GM12878 (cell line): ENCODE measurements at regions of chr4 and their contacts with region 1.

Region 1: DNA sequence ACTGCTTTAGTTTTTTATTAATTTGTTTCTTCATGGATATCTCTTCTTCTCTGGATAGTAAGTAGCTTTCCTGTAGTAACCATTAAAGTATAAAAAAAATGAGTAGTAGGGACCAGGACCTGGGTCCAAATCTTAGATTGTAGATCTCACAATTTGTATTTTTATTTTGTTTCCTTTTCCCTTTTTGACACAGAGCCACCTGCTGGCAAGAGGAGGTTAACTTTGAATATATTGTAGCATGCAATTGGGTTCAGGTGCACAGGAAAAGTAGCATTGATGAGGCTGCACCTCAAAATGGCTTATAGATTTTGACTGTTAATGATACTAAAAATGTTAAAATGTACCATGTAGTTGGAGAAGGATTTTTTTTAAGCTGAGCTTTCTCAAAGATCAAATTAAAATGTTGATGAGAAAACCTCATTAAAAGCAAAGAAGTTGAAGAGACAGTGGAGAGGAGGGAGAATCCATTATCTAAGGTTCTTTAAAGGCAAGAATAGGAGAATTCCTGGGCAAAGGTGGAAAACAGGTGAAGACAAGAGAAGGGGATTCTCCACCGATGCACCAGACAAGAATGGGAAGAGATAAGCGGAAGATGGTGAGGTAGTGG is 48.3 kb upstream of the HPGDS start:
- DNase-seq: no peak
- ATAC-seq: peak; percentile 67
- H3K4me3 ChIP-seq: no peak overlapping the region
- H3K27ac ChIP-seq: no peak overlapping the region
- H3K4me1 ChIP-seq: no peaks in the 10 kb centered on the region
- H3K27me3 ChIP-seq: peaks cover 0 to 2% of the 10 kb centered on the region in 2 experiments; a peak in 1 of 4 replicates
- CTCF ChIP-seq: peak; percentile 46 to 53 (median 47); a peak in 4 of 6 replicates
- EP300 ChIP-seq: no peak
- POLR2A ChIP-seq: no peak
- RAD21 ChIP-seq: peak; percentile 49

Region 2: GRCh38 chr4:94202769-94203168 is 188.1 kb before region 1 on chr4:
- CTCF ChIA-PET with region 1: no interaction called
- POLR2A ChIA-PET with region 1: no interaction called
- RAD21 ChIA-PET with region 1: no interaction called
- SMC1A ChIA-PET with region 1: no interaction called
- in situ Hi-C with region 1: no loop called
- intact Hi-C with region 1: no loop called
- DNase-seq: no peak
- ATAC-seq: no peak
- H3K4me3 ChIP-seq: no peak overlapping the region
- H3K27ac ChIP-seq: no peak overlapping the region
- H3K4me1 ChIP-seq: no peaks in the 10 kb centered on the region
- H3K27me3 ChIP-seq: no peaks in the 10 kb centered on the region
- CTCF ChIP-seq: no peak
- EP300 ChIP-seq: no peak
- POLR2A ChIP-seq: no peak
- RAD21 ChIP-seq: no peak

Region 3: GRCh38 chr4:94304365-94304971 is 86.4 kb before region 1 on chr4:
- CTCF ChIA-PET with region 1: interaction called, 20 read pairs
- POLR2A ChIA-PET with region 1: no interaction called
- RAD21 ChIA-PET with region 1: no interaction called
- SMC1A ChIA-PET with region 1: interaction called, 5 read pairs
- in situ Hi-C with region 1: loop called (anchors 5 kb)
- intact Hi-C with region 1: loop called (anchors 1 kb)
- DNase-seq: no peak
- ATAC-seq: peak; percentile 83
- H3K4me3 ChIP-seq: no peak overlapping the region
- H3K27ac ChIP-seq: no peak overlapping the region
- H3K4me1 ChIP-seq: no peaks in the 10 kb centered on the region
- H3K27me3 ChIP-seq: no peaks in the 10 kb centered on the region
- CTCF ChIP-seq: peak; percentile 43 to 58 (median 51); a peak in 4 of 6 replicates
- EP300 ChIP-seq: no peak
- POLR2A ChIP-seq: no peak
- RAD21 ChIP-seq: peak; percentile 69

Region 4: DNA sequence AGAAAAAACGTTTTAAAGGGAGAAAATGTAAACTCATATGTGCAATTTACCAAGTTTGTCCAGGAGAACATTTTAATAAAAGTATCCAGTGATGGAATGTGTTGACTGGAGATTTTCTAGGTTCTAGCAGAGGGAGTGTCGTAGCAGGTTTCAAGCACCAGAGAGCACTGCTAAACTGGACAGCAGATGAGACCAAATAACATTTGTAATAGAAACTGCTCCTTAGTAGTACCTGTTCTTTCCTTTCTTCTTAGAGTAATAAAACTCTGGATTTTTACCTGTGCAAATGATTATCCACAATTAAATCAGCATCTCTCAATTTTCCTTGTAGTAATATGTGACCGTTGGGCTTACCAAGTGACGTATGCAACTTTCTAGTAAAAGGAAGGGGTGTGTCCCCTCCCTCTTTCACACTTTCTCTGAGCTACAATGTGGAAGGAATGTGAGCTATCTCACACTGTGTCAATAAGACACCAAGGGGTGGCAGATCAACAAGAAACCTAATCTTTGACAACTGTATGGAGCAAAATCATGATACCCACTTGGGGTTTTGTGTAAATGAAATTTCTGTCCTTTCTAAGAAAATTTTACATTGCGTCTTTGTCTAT is 57.8 kb before region 1 on chr4:
- CTCF ChIA-PET with region 1: no interaction called
- POLR2A ChIA-PET with region 1: no interaction called
- RAD21 ChIA-PET with region 1: no interaction called
- SMC1A ChIA-PET with region 1: no interaction called
- in situ Hi-C with region 1: no loop called
- intact Hi-C with region 1: loop called (anchors 1 kb)
- DNase-seq: no peak
- ATAC-seq: 0 out of 3 replicates have a peak, but pooled peaks have one; percentile 29
- H3K4me3 ChIP-seq: no peak overlapping the region
- H3K27ac ChIP-seq: no peak overlapping the region
- H3K4me1 ChIP-seq: no peaks in the 10 kb centered on the region
- H3K27me3 ChIP-seq: no peaks in the 10 kb centered on the region
- CTCF ChIP-seq: peak in 1 of 3 experiments; percentile 14; a peak in 1 of 6 replicates
- EP300 ChIP-seq: no peak
- POLR2A ChIP-seq: no peak
- RAD21 ChIP-seq: 0 out of 2 replicates have a peak, but pooled peaks have one; percentile 5